ENCODE measurements at regions of chr20 and their contacts with region 1.

Region 1: DNA sequence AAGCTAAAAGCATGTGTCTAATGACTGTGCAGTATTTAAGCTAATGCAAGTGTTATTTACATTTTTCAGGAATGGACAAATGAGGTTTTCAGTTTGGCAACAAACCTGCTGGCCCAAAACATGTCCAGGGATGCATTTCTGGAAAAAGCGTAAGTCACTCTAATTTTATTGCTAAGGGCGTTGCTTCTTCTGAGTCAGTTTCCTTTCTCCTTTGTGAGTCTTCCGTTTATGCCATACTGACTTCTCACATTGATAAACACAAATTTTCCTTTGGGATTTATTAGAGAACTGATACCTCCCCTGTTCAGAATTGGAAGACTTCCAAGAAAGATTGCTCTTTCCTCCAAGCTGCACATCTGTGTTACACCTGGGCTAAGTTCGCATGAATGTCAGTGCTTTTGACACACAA is 422.9 kb upstream of the PLCB4 start:
- DNase-seq: peak; percentile 91
- H3K4me3 ChIP-seq: no peak overlapping the region
- H3K27ac ChIP-seq: peak overlapping the region; percentile 54
- H3K4me1 ChIP-seq: peaks cover 27% of the 10 kb centered on the region
- H3K27me3 ChIP-seq: no peaks in the 10 kb centered on the region
- CTCF ChIP-seq: no peak
- POLR2A ChIP-seq: no peak

Region 2: GRCh38 chr20:8545212-8545611 is 100.8 kb before region 1 on chr20:
- CTCF ChIA-PET with region 1: interaction called, 3 read pairs
- POLR2A ChIA-PET with region 1: no interaction called
- dilution Hi-C with region 1: no loop called
- intact Hi-C with region 1: loop called (anchors 5 kb)
- DNase-seq: no peak
- H3K4me3 ChIP-seq: no peak overlapping the region
- H3K27ac ChIP-seq: no peak overlapping the region
- H3K4me1 ChIP-seq: peaks cover 29% of the 10 kb centered on the region
- H3K27me3 ChIP-seq: no peaks in the 10 kb centered on the region
- CTCF ChIP-seq: no peak
- POLR2A ChIP-seq: no peak

Region 3: GRCh38 chr20:8656335-8656734 is 10.3 kb after region 1 on chr20:
- CTCF ChIA-PET with region 1: interaction called, 3 read pairs
- POLR2A ChIA-PET with region 1: no interaction called
- dilution Hi-C with region 1: no loop called
- intact Hi-C with region 1: loop called (anchors 1 kb)
- DNase-seq: peak; percentile 95
- H3K4me3 ChIP-seq: no peak overlapping the region
- H3K27ac ChIP-seq: peak overlapping the region; percentile 65
- H3K4me1 ChIP-seq: peaks cover 32% of the 10 kb centered on the region
- H3K27me3 ChIP-seq: no peaks in the 10 kb centered on the region
- CTCF ChIP-seq: no peak
- POLR2A ChIP-seq: no peak